ENCODE measurements at regions of chr3 and their contacts with region 1.

Region 1: GRCh38 chr3:191051037-191051436 is 148.0 kb upstream of the OSTN start:
- DNase-seq: no peak
- ATAC-seq: no peak
- H3K4me3 ChIP-seq: no peak overlapping the region
- H3K4me3 Mint-ChIP-seq: no peak overlapping the region
- H3K27ac ChIP-seq: no peak overlapping the region
- H3K27ac Mint-ChIP-seq: no peak overlapping the region
- H3K4me1 ChIP-seq: no peaks in the 10 kb centered on the region
- H3K4me1 Mint-ChIP-seq: no peaks in the 10 kb centered on the region
- H3K27me3 ChIP-seq: no peaks in the 10 kb centered on the region
- H3K27me3 Mint-ChIP-seq: no peaks in the 10 kb centered on the region

Region 2: GRCh38 chr3:190811775-190812480 is 239.1 kb before region 1 on chr3:
- CTCF ChIA-PET with region 1: no interaction called
- POLR2A ChIA-PET with region 1: no interaction called
- intact Hi-C with region 1: loop called in 1 of 2 experiments (anchors 10 kb)
- DNase-seq: no peak
- ATAC-seq: no peak
- H3K4me3 ChIP-seq: no peak overlapping the region
- H3K4me3 Mint-ChIP-seq: no peak overlapping the region
- H3K27ac ChIP-seq: no peak overlapping the region
- H3K27ac Mint-ChIP-seq: no peak overlapping the region
- H3K4me1 ChIP-seq: no peaks in the 10 kb centered on the region
- H3K4me1 Mint-ChIP-seq: no peaks in the 10 kb centered on the region
- H3K27me3 ChIP-seq: no peaks in the 10 kb centered on the region
- H3K27me3 Mint-ChIP-seq: peaks cover 0 to 10% (median 6%) of the 10 kb centered on the region in 5 donors

Region 3: DNA sequence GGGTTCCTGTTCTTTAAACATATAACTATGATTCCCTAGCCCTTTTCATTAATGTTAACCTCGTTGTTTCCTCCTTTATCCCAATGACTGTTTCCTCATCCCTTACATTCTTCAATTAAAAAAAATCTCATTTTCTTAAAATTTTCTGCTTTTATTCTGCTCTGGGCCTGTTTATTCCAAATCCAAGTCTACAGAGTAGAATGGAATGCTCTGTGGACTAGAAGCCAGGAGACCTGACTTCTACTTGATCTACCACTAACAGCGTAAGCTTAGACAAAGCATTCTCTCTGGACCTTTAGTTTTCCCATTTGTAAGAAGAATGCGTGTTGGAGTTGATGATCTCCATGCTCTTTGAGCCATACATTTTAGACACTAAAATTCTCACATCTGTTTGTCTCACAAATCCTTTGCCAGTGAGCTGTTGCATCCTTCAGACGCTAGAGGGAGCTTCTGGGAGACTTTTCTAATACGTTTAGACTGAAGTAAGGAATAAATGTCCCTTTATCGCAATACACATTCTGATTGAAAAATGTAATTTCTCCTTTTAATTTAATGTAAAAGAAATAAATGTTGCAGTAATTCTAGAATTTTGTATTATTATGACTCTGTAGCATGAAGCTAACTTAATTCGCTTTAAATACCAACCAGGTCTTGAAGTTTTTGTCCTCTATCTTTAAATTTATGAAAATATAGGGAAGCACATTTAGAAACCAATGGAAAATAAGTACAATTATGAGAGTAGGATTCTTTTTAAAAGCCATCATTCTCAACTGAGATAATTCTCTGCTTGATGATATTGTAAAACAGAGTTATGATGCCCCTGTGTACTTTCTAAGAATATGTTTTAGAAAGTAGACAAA is 166.8 kb before region 1 on chr3:
- CTCF ChIA-PET with region 1: no interaction called
- POLR2A ChIA-PET with region 1: no interaction called
- intact Hi-C with region 1: loop called in 1 of 2 experiments (anchors 2 kb)
- DNase-seq: peak in 2 of 9 donors; percentile 8 to 19
- ATAC-seq: no peak
- H3K4me3 ChIP-seq: no peak overlapping the region
- H3K4me3 Mint-ChIP-seq: no peak overlapping the region
- H3K27ac ChIP-seq: no peak overlapping the region
- H3K27ac Mint-ChIP-seq: no peak overlapping the region
- H3K4me1 ChIP-seq: no peaks in the 10 kb centered on the region
- H3K4me1 Mint-ChIP-seq: no peaks in the 10 kb centered on the region
- H3K27me3 ChIP-seq: no peaks in the 10 kb centered on the region
- H3K27me3 Mint-ChIP-seq: peaks cover 0 to 14% (median 4%) of the 10 kb centered on the region in 5 donors

Measured in naive thymus-derived CD4-positive, alpha-beta T cell (primary cell).